Activated naive CD4-positive, alpha-beta T cell treated with anti-CD3 and anti-CD28 coated beads for 36 hours (primary cell): ENCODE measurements at regions of chr11 and their contacts with region 1.

Region 1: DNA sequence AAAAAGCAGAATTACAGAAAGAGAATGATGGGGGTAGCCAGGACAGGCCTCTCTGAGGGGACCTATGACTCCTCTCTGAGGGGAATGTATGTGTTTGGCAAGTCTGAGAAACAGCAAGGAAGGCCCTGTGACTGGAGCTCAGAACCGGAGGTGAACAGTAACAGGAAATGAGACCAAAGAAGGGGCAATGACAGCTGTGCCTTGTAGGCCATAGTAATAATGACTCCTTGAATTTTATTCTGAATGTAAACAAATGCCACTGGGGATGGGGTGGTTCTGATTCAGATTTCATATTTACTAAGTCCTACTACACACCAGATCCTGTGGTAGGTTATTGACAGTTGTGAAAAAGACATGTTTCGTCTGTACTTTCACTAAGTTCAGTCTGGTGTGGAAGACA is 52.8 kb upstream of the APOA1 start:
- DNase-seq: peak; percentile 57
- H3K4me3 Mint-ChIP-seq: no peak overlapping the region
- H3K27ac Mint-ChIP-seq: peak overlapping the region; percentile 9
- H3K4me1 Mint-ChIP-seq: peaks cover 12% of the 10 kb centered on the region
- H3K27me3 Mint-ChIP-seq: no peaks in the 10 kb centered on the region

Region 2: GRCh38 chr11:116879800-116880625 is 10.2 kb before region 1 on chr11:
- CTCF ChIA-PET with region 1: interaction called, 13 read pairs
- intact Hi-C with region 1: no loop called
- DNase-seq: peak; percentile 33
- H3K4me3 Mint-ChIP-seq: no peak overlapping the region
- H3K27ac Mint-ChIP-seq: no peak overlapping the region
- H3K4me1 Mint-ChIP-seq: peaks cover 23% of the 10 kb centered on the region
- H3K27me3 Mint-ChIP-seq: no peaks in the 10 kb centered on the region

Region 3: GRCh38 chr11:116901211-116901610 is 11.0 kb after region 1 on chr11:
- CTCF ChIA-PET with region 1: no interaction called
- intact Hi-C with region 1: no loop called
- DNase-seq: no peak
- H3K4me3 Mint-ChIP-seq: no peak overlapping the region
- H3K27ac Mint-ChIP-seq: no peak overlapping the region
- H3K4me1 Mint-ChIP-seq: peaks cover 27% of the 10 kb centered on the region
- H3K27me3 Mint-ChIP-seq: no peaks in the 10 kb centered on the region